Left ventricle myocardium inferior (tissue), 1 donor: ENCODE measurements at regions of chr3 and their contacts with region 1.

Region 1: DNA sequence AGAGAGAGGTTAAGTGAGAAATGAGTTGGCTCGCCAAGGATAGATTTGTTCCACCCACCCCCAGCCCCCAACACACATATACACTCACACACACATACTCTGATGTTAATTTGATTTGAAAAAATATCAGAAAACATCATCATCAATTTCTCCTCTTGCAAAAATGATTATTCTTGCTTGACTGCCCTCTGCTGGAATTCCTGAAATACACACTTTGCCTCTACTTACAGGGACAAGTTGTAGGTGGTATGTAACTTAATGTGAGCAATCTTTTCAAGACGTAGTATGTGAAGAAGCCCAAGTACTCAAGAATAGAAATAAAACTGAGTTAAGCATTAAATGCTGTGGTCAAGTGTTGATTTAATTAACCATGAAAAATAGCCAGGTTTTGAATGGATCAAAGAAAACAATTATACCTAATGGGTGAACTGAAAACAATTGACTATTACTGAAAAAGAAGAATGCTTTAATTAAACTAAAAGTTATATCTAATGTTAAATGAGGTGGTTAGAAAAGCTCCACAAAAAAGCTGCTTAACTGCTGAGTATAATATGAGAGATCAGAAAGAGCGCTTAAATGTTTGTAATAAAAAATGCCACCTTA is 46.6 kb upstream of the MDFIC2 start:
- DNase-seq: no peak
- H3K4me3 ChIP-seq: no peak overlapping the region
- H3K27ac ChIP-seq: no peak overlapping the region
- H3K4me1 ChIP-seq: no peaks in the 10 kb centered on the region
- H3K27me3 ChIP-seq: no peaks in the 10 kb centered on the region
- CTCF ChIP-seq: peak; percentile 69

Region 2: DNA sequence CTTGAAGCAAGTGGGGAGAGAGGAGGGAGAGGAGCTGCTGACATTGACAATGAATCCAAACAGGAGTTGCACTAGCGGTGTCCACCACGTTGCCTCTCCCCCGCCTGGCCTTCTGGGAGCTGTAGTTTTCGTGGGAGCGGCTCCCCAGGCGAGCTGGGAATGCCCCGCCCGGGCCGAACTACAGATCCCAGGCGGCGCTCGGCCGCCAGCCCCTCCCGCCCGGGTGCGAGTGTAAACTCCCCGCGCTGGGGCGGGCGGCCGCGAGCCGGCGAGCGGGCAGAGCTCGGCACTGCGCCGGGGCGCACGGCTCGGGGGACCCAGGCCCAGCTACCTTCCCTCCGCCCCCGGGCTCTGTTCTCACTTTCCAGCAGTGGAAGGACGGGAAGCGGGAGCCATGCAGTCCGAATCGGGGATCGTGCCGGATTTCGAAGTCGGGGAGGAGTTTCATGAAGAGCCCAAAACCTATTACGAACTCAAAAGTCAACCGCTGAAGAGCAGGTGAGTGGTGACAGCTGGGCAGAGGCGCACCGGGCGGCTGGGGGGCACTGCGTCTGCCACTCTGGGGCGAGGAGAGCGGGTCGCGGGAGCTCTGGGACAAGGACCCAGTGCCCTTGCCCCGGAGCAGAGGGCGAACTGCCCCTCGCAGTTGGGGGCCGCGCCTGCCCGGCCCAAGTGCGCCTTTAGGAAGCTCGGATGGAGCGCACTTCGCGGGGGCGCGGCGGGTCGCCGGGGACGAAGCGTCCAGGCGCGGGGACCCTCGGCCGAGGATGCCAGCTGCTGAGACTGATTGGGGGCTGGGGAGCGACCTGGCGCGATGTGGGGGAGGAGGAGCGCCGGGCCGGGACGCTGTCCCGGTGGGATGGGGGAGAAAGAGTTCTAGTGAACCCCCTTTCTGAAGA is 619.6 kb before region 1 on chr3 and contains the start of gene MITF:
- intact Hi-C with region 1: no loop called
- DNase-seq: peak; percentile 94
- H3K4me3 ChIP-seq: peak within 1 kb of the TSS; percentile 92
- H3K27ac ChIP-seq: peak within 1 kb of the TSS; percentile 94
- H3K4me1 ChIP-seq: peaks cover 64% of the 10 kb centered on the region
- H3K27me3 ChIP-seq: no peaks in the 10 kb centered on the region
- CTCF ChIP-seq: no peak
- total RNA-seq, gene MITF: 81.9 TPM

Region 3: DNA sequence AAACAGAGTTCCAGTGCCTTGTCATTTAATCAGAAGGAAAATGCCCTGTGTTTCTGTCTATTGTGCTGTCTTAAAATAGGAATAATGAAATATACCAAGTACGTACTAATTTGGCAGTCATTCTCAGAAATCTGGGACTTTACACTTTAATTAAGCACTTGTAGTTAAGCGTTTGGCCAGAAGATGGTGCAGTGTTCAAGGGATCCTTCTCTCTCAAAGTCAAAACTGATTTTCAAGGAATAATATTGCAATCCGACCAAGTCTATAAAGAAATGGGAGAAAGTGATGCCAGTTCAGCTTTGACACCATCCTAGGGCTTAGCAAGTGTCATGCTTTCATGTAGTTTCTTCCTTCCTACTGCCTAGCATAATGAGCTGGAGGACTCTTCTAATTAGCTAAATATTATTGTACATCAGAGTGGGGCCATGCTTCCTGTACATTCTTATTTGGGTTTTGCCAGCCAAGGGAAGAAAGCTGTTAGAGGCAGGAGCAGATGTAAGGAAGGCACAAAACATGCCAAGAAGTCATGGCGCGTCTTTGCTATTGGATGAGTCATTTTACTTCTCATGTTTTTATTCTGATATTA is 294.8 kb before region 1 on chr3:
- intact Hi-C with region 1: loop called (anchors 10 kb)
- DNase-seq: no peak
- H3K4me3 ChIP-seq: no peak overlapping the region
- H3K27ac ChIP-seq: no peak overlapping the region
- H3K4me1 ChIP-seq: peaks cover 11% of the 10 kb centered on the region
- H3K27me3 ChIP-seq: peaks cover 11% of the 10 kb centered on the region
- CTCF ChIP-seq: peak; percentile 75